CD4-positive, alpha-beta T cell (primary cell): ENCODE measurements at regions of chr4 and their contacts with region 1.

Region 1: GRCh38 chr4:26860157-26860921 is at the start of gene STIM2:
- DNase-seq: peak; percentile 95 to 100 (median 98)
- ATAC-seq: peak; percentile 56
- H3K4me3 ChIP-seq: peak within 1 kb of the TSS; percentile 82
- H3K4me3 Mint-ChIP-seq: peak within 1 kb of the TSS; percentile 99
- H3K27ac ChIP-seq: peak within 1 kb of the TSS; percentile 71 to 95
- H3K27ac Mint-ChIP-seq: peak within 1 kb of the TSS; percentile 95
- H3K4me1 ChIP-seq: peaks cover 34% of the 10 kb centered on the region
- H3K4me1 Mint-ChIP-seq: peaks cover 62% of the 10 kb centered on the region
- H3K27me3 ChIP-seq: no peaks in the 10 kb centered on the region
- H3K27me3 Mint-ChIP-seq: no peaks in the 10 kb centered on the region
- CTCF ChIP-seq: peak; percentile 45
- total RNA-seq, gene STIM2: 53.7 to 54.9 TPM

Region 2: DNA sequence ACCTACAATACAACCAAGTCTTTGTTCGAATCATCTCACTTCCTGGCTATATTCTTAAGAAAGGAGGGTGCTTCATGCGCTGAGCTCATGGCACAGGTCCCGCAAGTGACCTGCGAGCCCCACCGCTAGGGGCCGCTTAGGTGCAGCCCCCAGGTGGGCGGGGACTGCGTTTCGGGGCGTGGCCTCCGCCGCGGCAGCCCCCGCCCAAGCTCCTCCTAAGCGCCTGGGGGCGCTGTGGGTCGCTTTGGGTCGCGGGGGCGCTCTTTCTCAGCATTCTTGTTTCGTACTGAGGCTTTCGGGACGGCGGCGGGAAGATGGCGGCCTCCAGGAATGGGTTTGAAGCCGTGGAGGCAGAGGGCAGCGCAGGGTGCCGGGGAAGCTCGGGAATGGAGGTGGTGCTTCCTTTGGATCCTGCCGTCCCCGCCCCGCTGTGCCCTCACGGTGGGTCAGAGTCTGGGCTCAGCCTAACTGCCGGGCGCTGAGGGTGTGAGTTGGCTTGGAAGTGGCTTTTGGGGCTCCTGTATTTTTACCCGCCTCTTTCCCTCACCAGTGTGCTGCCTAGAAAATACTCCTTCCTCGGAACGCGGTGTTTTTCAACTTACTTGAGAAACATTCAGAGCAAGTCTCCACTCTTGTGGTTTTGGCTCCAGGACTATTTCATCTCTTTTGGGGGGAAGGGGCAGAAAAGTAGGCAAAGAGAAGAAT is 1547.7 kb before region 1 on chr4 and contains the start of gene ZCCHC4:
- CTCF ChIA-PET with region 1: no interaction called
- POLR2A ChIA-PET with region 1: no interaction called
- intact Hi-C with region 1: loop called in 1 of 2 experiments (anchors 5 kb)
- DNase-seq: peak; percentile 79 to 96 (median 88)
- ATAC-seq: peak; percentile 99
- H3K4me3 ChIP-seq: peak within 1 kb of the TSS; percentile 70
- H3K4me3 Mint-ChIP-seq: peak within 1 kb of the TSS; percentile 97
- H3K27ac ChIP-seq: peak within 1 kb of the TSS; percentile 0 to 40
- H3K27ac Mint-ChIP-seq: peak within 1 kb of the TSS; percentile 90
- H3K4me1 ChIP-seq: peaks cover 13% of the 10 kb centered on the region
- H3K4me1 Mint-ChIP-seq: peaks cover 16% of the 10 kb centered on the region
- H3K27me3 ChIP-seq: peaks cover 0 to 3% of the 10 kb centered on the region in 2 experiments
- H3K27me3 Mint-ChIP-seq: peaks cover 14% of the 10 kb centered on the region
- CTCF ChIP-seq: peak; percentile 100
- total RNA-seq, gene ZCCHC4: 6.4 to 6.7 TPM

Region 3: GRCh38 chr4:26319467-26319948 is 540.8 kb before region 1 on chr4:
- CTCF ChIA-PET with region 1: no interaction called
- POLR2A ChIA-PET with region 1: interaction called, 8 read pairs
- intact Hi-C with region 1: loop called (anchors 2 to 5 kb)
- DNase-seq: peak; percentile 93 to 100 (median 95)
- ATAC-seq: peak; percentile 65
- H3K4me3 ChIP-seq: peak overlapping the region; percentile 99
- H3K4me3 Mint-ChIP-seq: peak overlapping the region; percentile 100
- H3K27ac ChIP-seq: peak overlapping the region; percentile 84 to 96
- H3K27ac Mint-ChIP-seq: peak overlapping the region; percentile 99
- H3K4me1 ChIP-seq: peaks cover 36% of the 10 kb centered on the region
- H3K4me1 Mint-ChIP-seq: peaks cover 35% of the 10 kb centered on the region
- H3K27me3 ChIP-seq: no peaks in the 10 kb centered on the region
- H3K27me3 Mint-ChIP-seq: no peaks in the 10 kb centered on the region
- CTCF ChIP-seq: no peak

Region 4: GRCh38 chr4:26879805-26880204 is 19.5 kb after region 1 on chr4:
- CTCF ChIA-PET with region 1: interaction called, 18 read pairs
- POLR2A ChIA-PET with region 1: interaction called, 274 read pairs
- intact Hi-C with region 1: loop called (anchors 1 to 2 kb)
- DNase-seq: peak in 1 of 14 experiments; percentile 39
- ATAC-seq: no peak
- H3K4me3 ChIP-seq: no peak overlapping the region
- H3K4me3 Mint-ChIP-seq: peak overlapping the region; percentile 12
- H3K27ac ChIP-seq: peak overlapping the region; percentile 42 to 69
- H3K27ac Mint-ChIP-seq: peak overlapping the region; percentile 94
- H3K4me1 ChIP-seq: peaks cover 34% of the 10 kb centered on the region
- H3K4me1 Mint-ChIP-seq: peaks cover 82% of the 10 kb centered on the region
- H3K27me3 ChIP-seq: no peaks in the 10 kb centered on the region
- H3K27me3 Mint-ChIP-seq: no peaks in the 10 kb centered on the region
- CTCF ChIP-seq: no peak

Region 5: DNA sequence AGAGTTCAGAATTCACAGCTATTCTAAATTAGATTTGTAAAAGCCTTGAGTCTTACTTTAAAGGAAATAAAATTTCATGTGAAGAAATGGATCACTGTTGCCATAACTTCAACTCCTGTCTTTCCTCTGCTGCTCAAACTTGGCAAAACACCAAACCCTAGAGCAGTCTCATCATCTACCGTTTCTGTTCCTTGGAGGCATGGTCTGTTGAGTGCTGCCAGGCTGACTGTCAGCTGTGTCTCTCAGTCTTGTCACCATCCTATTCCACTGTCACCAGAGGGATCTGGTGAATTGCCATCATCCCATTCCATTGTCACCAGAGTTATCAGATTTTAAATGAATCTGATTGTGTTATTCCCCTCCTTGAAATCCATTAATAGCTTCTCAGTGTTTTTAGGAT is 55.9 kb after region 1 on chr4:
- CTCF ChIA-PET with region 1: interaction called, 4 read pairs
- POLR2A ChIA-PET with region 1: interaction called, 13 read pairs
- intact Hi-C with region 1: loop called (anchors 5 to 10 kb)
- DNase-seq: peak in 1 of 14 experiments; percentile 21
- ATAC-seq: peak; percentile 34
- H3K4me3 ChIP-seq: no peak overlapping the region
- H3K4me3 Mint-ChIP-seq: no peak overlapping the region
- H3K27ac ChIP-seq: no peak overlapping the region
- H3K27ac Mint-ChIP-seq: peak overlapping the region; percentile 60
- H3K4me1 ChIP-seq: peaks cover 4% of the 10 kb centered on the region
- H3K4me1 Mint-ChIP-seq: peaks cover 83% of the 10 kb centered on the region
- H3K27me3 ChIP-seq: no peaks in the 10 kb centered on the region
- H3K27me3 Mint-ChIP-seq: no peaks in the 10 kb centered on the region
- CTCF ChIP-seq: no peak

Region 6: GRCh38 chr4:26992657-26993361 is 132.5 kb after region 1 on chr4:
- CTCF ChIA-PET with region 1: no interaction called
- POLR2A ChIA-PET with region 1: interaction called, 32 read pairs
- intact Hi-C with region 1: loop called in 1 of 2 experiments (anchors 5 kb)
- DNase-seq: peak in 3 of 14 experiments; percentile 16 to 32 (median 18)
- ATAC-seq: no peak
- H3K4me3 ChIP-seq: no peak overlapping the region
- H3K4me3 Mint-ChIP-seq: no peak overlapping the region
- H3K27ac ChIP-seq: no peak overlapping the region
- H3K27ac Mint-ChIP-seq: no peak overlapping the region
- H3K4me1 ChIP-seq: no peaks in the 10 kb centered on the region
- H3K4me1 Mint-ChIP-seq: peaks cover 29% of the 10 kb centered on the region
- H3K27me3 ChIP-seq: no peaks in the 10 kb centered on the region
- H3K27me3 Mint-ChIP-seq: no peaks in the 10 kb centered on the region
- CTCF ChIP-seq: no peak